ENCODE measurements at regions of chr5 and their contacts with region 1.

Region 1: DNA sequence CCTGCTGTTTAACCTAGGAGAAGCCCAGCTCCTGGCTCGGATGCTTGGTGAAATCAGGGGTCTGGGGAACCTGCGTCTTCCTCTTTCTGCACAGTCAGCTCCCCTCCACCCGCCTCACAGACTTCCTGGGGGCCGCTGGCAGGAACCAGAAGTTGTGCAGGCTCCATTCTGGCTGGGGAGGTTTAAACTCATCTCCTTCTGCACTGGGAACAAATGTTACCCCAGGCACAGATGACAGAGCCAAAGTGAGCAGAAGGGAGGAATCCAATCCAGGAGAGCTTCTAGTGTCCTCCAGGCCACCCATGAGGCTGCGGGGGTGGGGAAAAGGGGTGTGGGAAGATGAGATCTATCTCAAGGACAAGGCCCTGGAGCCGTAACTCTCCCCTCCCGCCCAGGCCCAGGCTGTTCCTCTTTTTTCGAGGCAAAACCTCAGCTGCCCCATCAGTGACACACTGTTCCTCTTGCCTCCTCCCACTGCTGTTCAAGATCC is 31.2 kb downstream of the KCNMB1 start:
- DNase-seq: peak; percentile 59 to 83 (median 64)
- ATAC-seq: peak; percentile 30 to 65 (median 44)
- H3K4me3 ChIP-seq: no peak overlapping the region
- H3K27ac ChIP-seq: peak overlapping the region in 9 of 12 donors; percentile 6 to 83 (median 45)
- H3K4me1 ChIP-seq: peaks cover 0 to 83% (median 52%) of the 10 kb centered on the region in 12 donors
- H3K27me3 ChIP-seq: peaks cover 0 to 6% (median 0%) of the 10 kb centered on the region in 9 donors
- CTCF ChIP-seq: no peak
- POLR2A ChIP-seq: no peak

Region 2: DNA sequence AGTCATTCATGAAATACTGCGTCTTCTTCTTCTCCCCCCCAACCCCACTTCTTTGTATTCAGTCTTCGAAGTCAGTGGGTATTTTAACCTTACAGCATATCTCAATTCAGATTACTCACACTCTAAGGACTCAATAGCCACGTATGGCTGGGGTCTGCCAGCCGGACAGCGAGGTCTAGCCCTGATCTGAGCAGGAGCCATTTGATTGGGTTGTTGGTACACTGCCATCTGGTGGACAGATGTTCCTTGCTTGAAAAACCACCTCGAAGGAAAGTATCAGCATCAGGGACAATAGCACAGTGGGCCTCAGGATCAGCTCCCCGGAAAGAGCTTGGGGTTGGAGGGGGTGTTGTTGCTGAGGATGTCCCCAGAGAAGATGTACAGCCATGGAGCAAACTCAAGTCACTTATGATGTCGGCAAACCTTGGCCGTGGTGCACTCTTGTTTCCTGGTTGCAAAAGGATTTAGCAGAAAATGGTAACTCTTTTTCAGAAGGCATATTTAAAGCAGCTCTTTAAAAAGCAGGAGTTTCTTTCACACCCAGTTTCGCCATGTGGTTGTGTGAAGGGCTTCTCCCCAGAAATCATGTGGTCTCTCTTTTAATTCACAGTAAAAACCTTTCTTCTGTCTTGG is 62.9 kb after region 1 on chr5:
- intact Hi-C with region 1: loop called in 2 of 10 experiments (anchors 5 kb)
- DNase-seq: peak in 4 of 5 donors; percentile 55 to 63 (median 59)
- ATAC-seq: peak in 3 of 4 donors; percentile 67 to 83 (median 76)
- H3K4me3 ChIP-seq: no peak overlapping the region
- H3K27ac ChIP-seq: peak overlapping the region in 1 of 12 donors; percentile 14
- H3K4me1 ChIP-seq: peaks cover 0 to 34% (median 2%) of the 10 kb centered on the region in 12 donors
- H3K27me3 ChIP-seq: no peaks in the 10 kb centered on the region
- CTCF ChIP-seq: peak; percentile 63 to 86 (median 78)
- POLR2A ChIP-seq: no peak